KBM-7 (cell line): ENCODE measurements at regions of chrX and their contacts with region 1.

Region 1: DNA sequence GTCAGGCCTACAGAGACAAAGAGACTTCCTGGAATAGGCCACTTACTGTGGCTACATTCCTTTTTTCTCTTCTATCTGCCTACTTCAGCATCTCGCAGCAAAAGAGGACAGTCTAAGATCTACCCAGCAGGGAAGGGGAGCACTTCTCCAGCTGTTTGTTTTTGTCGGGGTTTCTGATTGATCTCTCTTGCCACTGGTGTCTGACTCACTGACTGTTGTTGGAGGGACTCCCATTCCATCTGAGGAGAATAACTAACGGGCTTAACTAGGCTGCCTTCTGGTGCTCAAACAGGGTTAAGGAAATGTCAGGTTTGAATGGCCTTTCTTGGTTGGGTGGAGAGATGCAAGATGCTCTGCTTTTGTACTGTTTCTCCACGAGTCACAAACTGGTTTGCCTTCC is 100.2 kb upstream of the TMEM164 start:
- DNase-seq: no peak

Region 2: GRCh38 chrX:110125446-110126162 is 222.9 kb after region 1 on chrX:
- in situ Hi-C with region 1: loop called (anchors 10 kb)
- DNase-seq: peak; percentile 32